ENCODE measurements at regions of chr17 and their contacts with region 1.

Region 1: GRCh38 chr17:59914274-59914854 is 21.4 kb downstream of the RPS6KB1 start:
- DNase-seq: peak in 7 of 9 donors; percentile 12 to 55 (median 44)
- ATAC-seq: peak; percentile 79
- H3K4me3 ChIP-seq: no peak overlapping the region
- H3K4me3 Mint-ChIP-seq: no peak overlapping the region
- H3K27ac ChIP-seq: no peak overlapping the region
- H3K27ac Mint-ChIP-seq: no peak overlapping the region
- H3K4me1 ChIP-seq: no peaks in the 10 kb centered on the region
- H3K4me1 Mint-ChIP-seq: peaks cover 0 to 6% (median 3%) of the 10 kb centered on the region in 7 donors
- H3K27me3 ChIP-seq: no peaks in the 10 kb centered on the region
- H3K27me3 Mint-ChIP-seq: no peaks in the 10 kb centered on the region

Region 2: DNA sequence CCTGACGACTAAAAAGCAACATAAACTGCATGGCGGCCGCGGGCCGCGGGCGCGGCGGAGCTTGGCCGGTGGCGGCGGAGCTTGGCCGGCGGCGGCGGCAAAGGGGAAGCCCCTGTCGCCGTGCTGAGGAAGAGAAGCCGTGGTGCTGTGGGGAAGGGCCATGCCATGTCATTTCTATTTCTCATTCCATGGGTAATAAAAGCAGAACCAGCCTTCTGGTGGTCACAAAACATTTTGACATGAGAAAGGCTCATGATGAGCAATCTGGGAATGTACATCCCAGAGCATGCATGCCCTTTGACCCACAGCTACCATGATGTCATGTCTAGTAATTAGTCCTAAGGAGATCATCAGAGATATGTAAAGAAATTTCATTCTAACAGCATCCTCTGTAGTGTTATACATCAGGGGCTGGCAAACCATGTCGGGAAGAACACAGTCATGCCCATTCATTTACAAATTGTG is 188.3 kb after region 1 on chr17:
- CTCF ChIA-PET with region 1: no interaction called
- POLR2A ChIA-PET with region 1: no interaction called
- intact Hi-C with region 1: loop called in 1 of 2 experiments (anchors 10 kb)
- DNase-seq: peak in 4 of 9 donors; percentile 11 to 40 (median 16)
- ATAC-seq: peak; percentile 90
- H3K4me3 ChIP-seq: no peak overlapping the region
- H3K4me3 Mint-ChIP-seq: peak overlapping the region; percentile 52 to 81 (median 65)
- H3K27ac ChIP-seq: no peak overlapping the region
- H3K27ac Mint-ChIP-seq: no peak overlapping the region
- H3K4me1 ChIP-seq: peaks cover 0 to 3% of the 10 kb centered on the region in 2 donors
- H3K4me1 Mint-ChIP-seq: peaks cover 0 to 19% (median 9%) of the 10 kb centered on the region in 7 donors
- H3K27me3 ChIP-seq: peaks cover 0 to 3% of the 10 kb centered on the region in 2 donors
- H3K27me3 Mint-ChIP-seq: peaks cover 15 to 51% (median 42%) of the 10 kb centered on the region in 5 donors